ENCODE measurements at regions of chr16 and their contacts with region 1.

Region 1: DNA sequence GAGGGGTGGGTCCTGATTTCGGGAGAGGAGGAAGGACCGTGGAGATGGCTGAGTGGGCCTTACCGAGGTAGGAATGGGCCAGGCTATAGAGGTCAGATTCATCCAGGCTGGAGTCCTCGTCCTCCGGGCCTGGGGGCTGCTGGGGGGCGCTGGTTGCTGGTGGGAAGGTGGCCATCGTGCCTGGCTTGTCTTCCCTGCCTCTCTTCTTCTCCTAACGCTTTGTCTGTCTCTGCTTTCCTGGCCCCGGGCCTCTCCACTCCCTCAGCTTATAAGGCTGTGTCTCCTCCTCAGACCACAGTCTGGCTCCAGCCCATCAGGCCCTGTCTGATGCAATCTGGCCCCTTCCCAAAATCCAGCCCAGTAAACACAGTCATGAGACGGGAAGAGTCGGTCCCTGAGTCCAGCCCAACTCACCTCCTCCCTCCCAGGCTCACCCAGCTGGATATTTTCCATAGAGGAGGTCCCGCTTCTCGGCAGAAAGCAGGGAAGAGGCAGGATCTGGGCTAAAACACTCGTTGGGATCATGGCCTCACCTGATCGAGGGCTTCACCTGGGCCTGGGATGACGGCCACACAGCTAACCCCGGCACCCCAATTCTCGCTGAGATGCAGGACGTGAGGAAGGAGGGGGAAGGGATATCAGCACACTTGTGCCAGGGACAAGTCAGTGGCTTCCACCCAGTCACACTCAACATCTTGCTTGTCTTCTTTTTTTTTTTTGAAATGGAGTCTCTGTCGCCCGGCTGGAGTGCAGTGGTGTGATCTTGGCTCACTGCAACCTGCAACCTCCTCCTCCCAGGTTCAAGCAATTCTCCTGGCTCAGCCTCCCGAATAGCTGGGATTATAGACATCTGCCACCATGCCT is at the start of gene NUPR1:
- DNase-seq: peak; percentile 89
- ATAC-seq: peak; percentile 71
- H3K4me3 ChIP-seq: peak within 1 kb of the TSS; percentile 60 to 76 (median 62)
- H3K27ac ChIP-seq: peak within 1 kb of the TSS; percentile 78
- H3K4me1 ChIP-seq: peaks cover 75% of the 10 kb centered on the region
- H3K27me3 ChIP-seq: no peaks in the 10 kb centered on the region
- CTCF ChIP-seq: no peak
- EP300 ChIP-seq: 0 out of 4 replicates have a peak, but pooled peaks of 1 of the 2 experiments have one; percentile 46
- POLR2A ChIP-seq: peak; percentile 56 to 62
- RAD21 ChIP-seq: no peak
- total RNA-seq, gene NUPR1: 18.0 and 23.9 TPM in 2 replicates

Region 2: GRCh38 chr16:28309811-28310311 is 229.1 kb before region 1 on chr16:
- CTCF ChIA-PET with region 1: no interaction called
- POLR2A ChIA-PET with region 1: no interaction called
- in situ Hi-C with region 1: no loop called
- intact Hi-C with region 1: no loop called
- DNase-seq: no peak
- ATAC-seq: no peak
- H3K4me3 ChIP-seq: no peak overlapping the region
- H3K27ac ChIP-seq: no peak overlapping the region
- H3K4me1 ChIP-seq: peaks cover 6% of the 10 kb centered on the region; the same call in 1 of the 2 replicates
- H3K27me3 ChIP-seq: peaks cover 3 to 46% of the 10 kb centered on the region in 2 experiments; a peak in 3 of 5 replicates
- CTCF ChIP-seq: no peak
- EP300 ChIP-seq: no peak
- POLR2A ChIP-seq: no peak
- RAD21 ChIP-seq: no peak

Region 3: GRCh38 chr16:28524681-28525171 is 14.2 kb before region 1 on chr16:
- CTCF ChIA-PET with region 1: no interaction called
- POLR2A ChIA-PET with region 1: interaction called, 23 read pairs
- in situ Hi-C with region 1: no loop called
- intact Hi-C with region 1: no loop called
- DNase-seq: no peak
- ATAC-seq: no peak
- H3K4me3 ChIP-seq: no peak overlapping the region
- H3K27ac ChIP-seq: peak overlapping the region; percentile 80
- H3K4me1 ChIP-seq: peaks cover 89% of the 10 kb centered on the region
- H3K27me3 ChIP-seq: no peaks in the 10 kb centered on the region
- CTCF ChIP-seq: peak; percentile 34; the same call in 1 of the 2 replicates
- EP300 ChIP-seq: no peak
- POLR2A ChIP-seq: no peak
- RAD21 ChIP-seq: no peak

Region 4: DNA sequence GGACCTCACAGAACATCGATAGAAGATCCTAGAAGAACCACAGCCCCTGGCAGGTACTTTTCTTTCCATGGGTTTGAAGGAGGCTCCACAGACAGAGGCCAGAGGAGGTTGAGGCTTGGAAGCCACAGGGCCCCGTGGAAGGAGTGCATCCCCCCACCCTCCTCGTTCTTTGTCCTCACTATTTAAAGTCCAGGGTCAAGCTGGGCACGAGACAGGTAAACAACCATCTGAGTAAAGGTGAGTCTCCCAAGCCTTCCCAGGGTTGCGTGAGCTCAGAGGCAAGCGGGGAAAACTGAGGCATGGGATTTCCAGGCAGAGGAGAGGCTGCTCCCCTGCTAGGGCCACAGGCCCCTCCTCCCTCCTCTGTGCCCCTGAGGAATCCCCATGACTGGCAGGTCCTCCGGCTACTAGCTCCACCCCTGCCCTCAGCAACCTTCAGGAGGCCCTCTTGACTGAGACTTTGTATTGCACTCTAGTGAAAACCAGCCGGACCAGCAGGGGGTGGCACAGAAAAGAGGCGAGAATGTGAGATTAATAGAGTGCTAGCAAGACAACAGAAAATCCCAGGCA is 58.8 kb after region 1 on chr16:
- CTCF ChIA-PET with region 1: no interaction called
- POLR2A ChIA-PET with region 1: interaction called, 10 read pairs
- in situ Hi-C with region 1: no loop called
- intact Hi-C with region 1: no loop called
- DNase-seq: peak; percentile 91
- ATAC-seq: peak; percentile 61
- H3K4me3 ChIP-seq: peak overlapping the region; percentile 66 to 80 (median 69)
- H3K27ac ChIP-seq: peak overlapping the region; percentile 81
- H3K4me1 ChIP-seq: peaks cover 55% of the 10 kb centered on the region
- H3K27me3 ChIP-seq: no peaks in the 10 kb centered on the region
- CTCF ChIP-seq: peak; percentile 77
- EP300 ChIP-seq: 0 out of 4 replicates have a peak, but pooled peaks of 1 of the 2 experiments have one; percentile 17
- POLR2A ChIP-seq: peak; percentile 40 to 67; a peak in 2 of 4 replicates
- RAD21 ChIP-seq: peak; percentile 52

Region 5: DNA sequence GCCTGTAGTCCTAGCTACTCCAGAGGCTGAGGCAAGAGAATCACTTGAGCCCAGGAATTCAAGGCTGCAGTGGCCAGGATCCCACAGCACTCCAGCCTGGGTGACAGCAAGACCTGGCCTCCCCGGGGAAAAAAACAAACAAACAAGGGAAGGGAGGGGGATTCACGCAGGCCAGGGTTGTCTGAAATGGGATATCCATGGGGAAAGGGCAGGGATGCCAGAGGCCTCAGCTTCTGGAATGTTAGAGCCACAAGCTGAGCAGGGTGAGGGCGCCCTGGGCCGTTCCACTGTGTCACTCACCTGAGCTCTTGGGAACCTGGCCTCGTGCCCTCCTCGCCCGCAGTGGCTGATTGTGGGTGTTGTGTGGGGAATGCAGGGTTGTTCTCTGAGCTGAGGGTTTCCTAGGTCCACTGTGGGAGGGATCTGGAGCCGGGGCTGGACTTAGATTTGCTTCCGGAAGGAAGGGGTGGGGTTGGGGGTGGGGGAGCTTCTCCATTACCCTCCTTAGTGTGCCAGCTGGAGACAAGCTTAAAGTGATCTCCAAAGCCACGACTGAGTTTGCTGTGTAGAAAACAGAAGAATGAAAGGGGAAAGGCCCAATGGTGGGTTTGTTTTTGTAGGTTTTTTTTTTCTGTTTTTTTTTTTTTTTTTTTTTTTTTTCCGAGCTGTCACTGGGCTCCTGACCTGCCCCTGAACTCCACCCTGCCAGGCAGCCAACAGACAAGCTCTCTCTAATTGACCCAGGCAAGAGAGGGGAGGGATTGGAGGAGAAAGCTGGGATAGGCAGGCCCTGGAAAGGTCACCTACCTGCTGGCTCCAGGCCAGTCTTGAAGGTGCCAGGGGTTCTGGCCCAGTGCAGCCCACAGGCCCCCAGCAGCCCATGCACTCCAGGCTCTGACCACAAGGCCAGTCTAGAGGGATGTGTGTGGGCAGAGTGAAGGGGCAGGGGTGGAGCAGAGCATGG is 70.9 kb after region 1 on chr16 and contains the start of gene SULT1A1:
- CTCF ChIA-PET with region 1: no interaction called
- POLR2A ChIA-PET with region 1: interaction called, 11 read pairs
- in situ Hi-C with region 1: no loop called
- intact Hi-C with region 1: loop called (anchors 10 kb)
- DNase-seq: peak; percentile 93
- ATAC-seq: peak; percentile 71
- H3K4me3 ChIP-seq: peak within 1 kb of the TSS; percentile 66 to 90 (median 70)
- H3K27ac ChIP-seq: peak within 1 kb of the TSS; percentile 75
- H3K4me1 ChIP-seq: peaks cover 39% of the 10 kb centered on the region
- H3K27me3 ChIP-seq: no peaks in the 10 kb centered on the region
- CTCF ChIP-seq: no peak
- EP300 ChIP-seq: no peak; a peak in 1 of 4 replicates
- POLR2A ChIP-seq: peak; percentile 74 to 99
- RAD21 ChIP-seq: peak; percentile 21; the same call in 1 of the 2 replicates
- total RNA-seq, gene SULT1A1: 147 and 174 TPM in 2 replicates

Measured in HepG2 (cell line).